Activated T-helper 2 cell treated with anti-CD3 and anti-CD28 coated beads, Interferon-gamma antibody, Interleukin-2, Interleukin-4, amounts not matched to agents 10 μg/mL and 5 μg/mL and 100 μg/mL, durations not matched to agents 14 hours and 24 hours and 36 hours (primary cell): ENCODE measurements at regions of chr1 and their contacts with region 1.

Region 1: GRCh38 chr1:76674689-76675210 is 192.5 kb upstream of the ST6GALNAC5 start:
- DNase-seq: no peak
- H3K4me3 Mint-ChIP-seq: no peak overlapping the region
- H3K27ac Mint-ChIP-seq: no peak overlapping the region
- H3K4me1 Mint-ChIP-seq: no peaks in the 10 kb centered on the region
- H3K27me3 Mint-ChIP-seq: no peaks in the 10 kb centered on the region

Region 2: GRCh38 chr1:76725864-76726619 is 51.3 kb after region 1 on chr1:
- intact Hi-C with region 1: loop called (anchors 1 kb)
- DNase-seq: no peak
- H3K4me3 Mint-ChIP-seq: no peak overlapping the region
- H3K27ac Mint-ChIP-seq: no peak overlapping the region
- H3K4me1 Mint-ChIP-seq: no peaks in the 10 kb centered on the region
- H3K27me3 Mint-ChIP-seq: peaks cover 2% of the 10 kb centered on the region